ENCODE measurements at regions of chr17 and their contacts with region 1.

Region 1: DNA sequence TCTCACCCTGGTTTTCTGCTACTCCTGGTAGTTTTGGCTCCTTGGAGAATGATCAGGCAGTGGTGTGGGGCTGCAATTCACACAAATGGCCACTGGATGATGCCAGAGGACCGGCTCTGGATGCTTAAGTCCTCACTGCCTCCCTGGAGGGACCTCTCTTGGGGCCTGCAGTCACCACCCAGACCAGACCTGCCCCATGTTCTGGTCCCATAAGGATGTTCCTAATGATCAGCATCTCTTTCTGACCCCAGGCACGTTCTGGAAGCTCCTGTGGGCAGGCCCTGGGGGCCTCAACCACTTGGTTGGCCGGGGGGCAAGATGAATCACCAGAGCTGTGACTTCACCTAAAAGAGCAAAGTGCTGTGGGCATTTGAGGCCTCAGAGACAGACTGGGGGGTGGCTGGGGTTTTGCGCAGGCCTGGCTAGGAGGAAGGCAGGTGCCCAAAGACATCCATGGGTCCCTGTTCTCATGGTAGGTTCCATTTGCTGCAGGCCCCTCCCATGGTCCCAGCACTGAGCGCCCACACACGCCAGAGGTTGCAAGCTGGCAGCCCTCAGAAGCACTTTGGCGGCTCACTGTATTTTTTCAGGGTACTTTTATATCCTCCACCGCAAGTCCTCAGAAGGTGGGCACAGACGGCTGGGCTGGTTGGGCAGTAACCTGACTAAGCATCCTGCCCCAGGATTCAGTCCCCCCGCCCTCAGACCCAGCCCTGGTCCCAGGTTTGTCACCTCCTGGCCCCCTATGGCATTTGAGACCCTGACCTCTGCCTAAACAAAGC is 53.2 kb downstream of the NT5M start:
- DNase-seq: peak; percentile 81
- H3K4me3 Mint-ChIP-seq: no peak overlapping the region
- H3K27ac Mint-ChIP-seq: no peak overlapping the region
- H3K4me1 Mint-ChIP-seq: peaks cover 2% of the 10 kb centered on the region
- H3K27me3 Mint-ChIP-seq: no peaks in the 10 kb centered on the region

Region 2: GRCh38 chr17:17391668-17392370 is 35.5 kb after region 1 on chr17:
- CTCF ChIA-PET with region 1: interaction called, 4 read pairs
- POLR2A ChIA-PET with region 1: no interaction called
- intact Hi-C with region 1: loop called (anchors 5 kb)
- DNase-seq: peak; percentile 81
- H3K4me3 Mint-ChIP-seq: peak overlapping the region; percentile 71
- H3K27ac Mint-ChIP-seq: peak overlapping the region; percentile 2
- H3K4me1 Mint-ChIP-seq: peaks cover 15% of the 10 kb centered on the region
- H3K27me3 Mint-ChIP-seq: no peaks in the 10 kb centered on the region

Region 3: DNA sequence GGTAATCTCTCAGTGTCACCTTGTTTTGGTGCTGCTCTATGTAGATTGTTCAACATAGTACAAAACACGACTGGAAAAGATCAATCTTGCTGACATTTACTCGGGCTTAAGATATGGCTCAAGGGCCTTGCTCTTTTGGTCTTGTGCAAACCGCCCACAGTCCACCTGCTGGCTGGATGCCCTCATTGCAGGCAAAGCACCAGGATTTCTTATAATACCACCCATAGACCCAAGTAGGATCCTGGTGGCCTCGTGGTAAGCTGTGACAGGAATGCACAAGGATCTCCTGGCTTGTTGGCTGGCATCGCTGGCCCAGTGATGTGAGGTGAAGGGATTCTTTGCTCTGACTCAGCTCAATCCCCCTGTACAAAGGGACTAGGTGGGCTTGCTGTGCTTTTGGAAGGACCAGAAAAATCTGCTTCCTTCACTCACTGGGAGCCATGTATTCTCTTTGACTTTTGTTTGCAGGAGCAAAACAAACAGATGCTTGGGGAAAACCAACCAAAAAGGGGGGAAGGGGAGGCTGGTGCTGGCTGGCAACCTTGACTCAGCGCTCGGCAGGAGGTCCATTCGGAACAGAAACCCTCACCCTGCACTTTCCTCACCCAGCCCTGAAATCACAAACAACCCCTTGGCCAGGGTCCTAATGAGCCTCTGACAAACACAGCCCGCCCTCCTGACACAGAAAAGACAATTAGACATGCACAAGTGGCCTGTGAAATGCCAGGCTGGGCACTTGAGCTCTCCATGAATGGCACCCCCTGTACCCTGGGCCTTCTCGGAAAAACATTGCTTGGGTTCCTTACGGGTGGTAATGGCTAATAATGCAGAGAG is 83.9 kb after region 1 on chr17:
- CTCF ChIA-PET with region 1: interaction called, 14 read pairs
- POLR2A ChIA-PET with region 1: no interaction called
- intact Hi-C with region 1: loop called (anchors 1 kb)
- DNase-seq: peak; percentile 85
- H3K4me3 Mint-ChIP-seq: no peak overlapping the region
- H3K27ac Mint-ChIP-seq: no peak overlapping the region
- H3K4me1 Mint-ChIP-seq: peaks cover 4% of the 10 kb centered on the region
- H3K27me3 Mint-ChIP-seq: no peaks in the 10 kb centered on the region

Region 4: DNA sequence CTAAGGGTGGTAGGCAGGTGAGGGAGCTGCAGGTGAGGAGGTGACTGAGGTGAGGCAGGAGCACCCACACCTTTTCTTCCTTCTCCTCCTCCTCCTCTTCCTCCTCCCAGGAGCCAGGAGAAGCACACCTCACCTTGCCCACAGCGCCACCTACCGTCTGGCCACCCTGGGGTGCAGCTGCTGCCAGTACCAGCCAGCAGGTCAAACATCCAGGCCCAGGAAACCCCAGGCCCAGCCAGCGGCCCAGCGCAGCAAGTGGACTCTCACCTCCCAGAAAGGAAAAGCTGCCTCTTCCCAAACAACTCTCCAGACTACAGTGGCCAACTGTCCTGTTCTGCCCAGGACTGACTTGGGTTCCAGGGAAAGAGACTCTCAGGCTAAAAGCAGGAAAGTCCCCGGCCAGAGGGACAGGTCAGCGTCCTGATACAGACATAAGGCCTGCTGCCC is 212.4 kb after region 1 on chr17:
- CTCF ChIA-PET with region 1: interaction called, 18 read pairs
- POLR2A ChIA-PET with region 1: no interaction called
- intact Hi-C with region 1: no loop called
- DNase-seq: peak; percentile 72
- H3K4me3 Mint-ChIP-seq: no peak overlapping the region
- H3K27ac Mint-ChIP-seq: no peak overlapping the region
- H3K4me1 Mint-ChIP-seq: no peaks in the 10 kb centered on the region
- H3K27me3 Mint-ChIP-seq: no peaks in the 10 kb centered on the region

Region 5: GRCh38 chr17:17641621-17642409 is 285.5 kb after region 1 on chr17:
- CTCF ChIA-PET with region 1: interaction called, 110 read pairs
- POLR2A ChIA-PET with region 1: no interaction called
- intact Hi-C with region 1: loop called (anchors 1 kb)
- DNase-seq: peak; percentile 86
- H3K4me3 Mint-ChIP-seq: no peak overlapping the region
- H3K27ac Mint-ChIP-seq: no peak overlapping the region
- H3K4me1 Mint-ChIP-seq: no peaks in the 10 kb centered on the region
- H3K27me3 Mint-ChIP-seq: peaks cover 5% of the 10 kb centered on the region